Sigmoid colon (tissue), 7 donors: ENCODE measurements at regions of chr9 and their contacts with region 1.

Region 1: GRCh38 chr9:33721674-33722358 is 73.5 kb upstream of the PRSS3 start:
- DNase-seq: peak; percentile 90
- H3K4me3 ChIP-seq: no peak overlapping the region
- H3K27ac ChIP-seq: no peak overlapping the region
- H3K4me1 ChIP-seq: peaks cover 0 to 4% (median 2%) of the 10 kb centered on the region in 4 donors
- H3K27me3 ChIP-seq: peaks cover 0 to 11% (median 0%) of the 10 kb centered on the region in 3 donors
- CTCF ChIP-seq: peak; percentile 100
- EP300 ChIP-seq: no peak
- POLR2A ChIP-seq: no peak

Region 2: DNA sequence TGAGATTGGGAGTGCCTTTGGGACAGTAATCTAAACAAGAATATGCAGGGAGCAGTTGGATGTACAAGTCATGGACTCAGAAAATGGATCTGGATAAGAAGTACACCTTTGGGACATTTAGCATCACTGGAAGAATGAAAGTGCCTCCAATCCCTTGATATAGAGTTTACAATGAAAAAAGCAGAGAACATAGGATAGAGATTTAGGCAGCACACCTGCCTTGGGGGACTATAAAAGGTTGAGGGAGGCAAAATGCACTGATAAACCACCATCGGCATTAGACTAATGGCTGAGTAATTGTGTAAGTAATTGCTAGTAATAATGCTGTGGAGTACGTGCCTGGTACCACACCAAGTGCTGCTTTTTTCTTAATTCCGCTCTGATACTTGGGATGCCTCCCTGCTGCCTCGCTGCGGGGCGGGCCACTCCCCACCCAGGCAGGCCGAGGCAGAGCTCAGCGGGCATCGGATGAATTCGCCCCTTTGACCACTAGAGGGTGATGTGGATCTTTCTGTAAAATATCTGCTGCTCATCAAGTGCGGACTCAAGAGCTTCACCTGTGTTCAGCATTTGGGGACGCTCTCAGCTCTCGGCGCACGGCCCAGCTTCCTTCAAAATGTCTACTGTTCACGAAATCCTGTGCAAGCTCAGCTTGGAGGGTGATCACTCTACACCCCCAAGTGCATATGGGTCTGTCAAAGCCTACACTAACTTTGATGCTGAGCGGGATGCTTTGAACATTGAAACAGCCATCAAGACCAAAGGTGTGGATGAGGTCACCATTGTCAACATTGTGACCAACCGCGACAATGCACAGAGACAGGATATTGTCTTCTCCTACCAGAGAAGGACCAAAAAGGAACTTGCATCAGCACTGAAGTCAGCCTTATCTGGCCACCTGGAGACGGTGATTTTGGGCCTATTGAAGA is 97.9 kb before region 1 on chr9:
- intact Hi-C with region 1: loop called (anchors 1 kb)
- DNase-seq: no peak
- H3K4me3 ChIP-seq: no peak overlapping the region
- H3K27ac ChIP-seq: no peak overlapping the region
- H3K4me1 ChIP-seq: peaks cover 0 to 17% (median 8%) of the 10 kb centered on the region in 4 donors
- H3K27me3 ChIP-seq: no peaks in the 10 kb centered on the region
- CTCF ChIP-seq: peak; percentile 59 to 91 (median 88)
- EP300 ChIP-seq: no peak
- POLR2A ChIP-seq: no peak

Region 3: GRCh38 chr9:33676746-33677505 is 44.9 kb before region 1 on chr9:
- intact Hi-C with region 1: loop called (anchors 5 kb)
- DNase-seq: peak; percentile 64
- H3K4me3 ChIP-seq: peak overlapping the region; percentile 57 to 70 (median 64)
- H3K27ac ChIP-seq: peak overlapping the region; percentile 87 to 92 (median 90)
- H3K4me1 ChIP-seq: peaks cover 0 to 21% (median 11%) of the 10 kb centered on the region in 4 donors
- H3K27me3 ChIP-seq: no peaks in the 10 kb centered on the region
- CTCF ChIP-seq: no peak
- EP300 ChIP-seq: no peak
- POLR2A ChIP-seq: no peak